Adrenal gland (tissue), 19 donors: ENCODE measurements at regions of chr13 and their contacts with region 1.

Region 1: GRCh38 chr13:29707876-29708543 is 112.5 kb upstream of the SLC7A1 start:
- DNase-seq: peak in 5 of 7 donors; percentile 15 to 39 (median 26)
- H3K4me3 ChIP-seq: no peak overlapping the region
- H3K27ac ChIP-seq: no peak overlapping the region
- H3K4me1 ChIP-seq: no peaks in the 10 kb centered on the region
- H3K27me3 ChIP-seq: no peaks in the 10 kb centered on the region
- CTCF ChIP-seq: peak in 5 of 6 experiments; percentile 30 to 45 (median 40)
- POLR2A ChIP-seq: no peak

Region 2: GRCh38 chr13:29508130-29508875 is 199.7 kb before region 1 on chr13:
- intact Hi-C with region 1: loop called (anchors 5 kb)
- DNase-seq: peak; percentile 72 to 95 (median 87)
- H3K4me3 ChIP-seq: no peak overlapping the region
- H3K27ac ChIP-seq: no peak overlapping the region
- H3K4me1 ChIP-seq: peaks cover 0 to 4% of the 10 kb centered on the region in 2 donors
- H3K27me3 ChIP-seq: peaks cover 15% of the 10 kb centered on the region
- CTCF ChIP-seq: peak; percentile 92 to 99 (median 94)
- POLR2A ChIP-seq: no peak

Region 3: GRCh38 chr13:29513397-29514322 is 194.3 kb before region 1 on chr13:
- intact Hi-C with region 1: loop called (anchors 5 kb)
- DNase-seq: no peak
- H3K4me3 ChIP-seq: no peak overlapping the region
- H3K27ac ChIP-seq: no peak overlapping the region
- H3K4me1 ChIP-seq: peaks cover 0 to under 1% of the 10 kb centered on the region in 2 donors
- H3K27me3 ChIP-seq: no peaks in the 10 kb centered on the region
- CTCF ChIP-seq: no peak
- POLR2A ChIP-seq: no peak

Region 4: GRCh38 chr13:30408319-30409101 is 700.5 kb after region 1 on chr13:
- intact Hi-C with region 1: no loop called
- DNase-seq: peak; percentile 96 to 99 (median 97)
- H3K4me3 ChIP-seq: peak overlapping the region in 2 of 4 donors; percentile 11 to 18
- H3K27ac ChIP-seq: peak overlapping the region in 4 of 5 donors; percentile 77 to 87 (median 82)
- H3K4me1 ChIP-seq: peaks cover 4 to 5% of the 10 kb centered on the region in 2 donors
- H3K27me3 ChIP-seq: no peaks in the 10 kb centered on the region
- CTCF ChIP-seq: peak; percentile 63 to 87 (median 80)
- POLR2A ChIP-seq: peak in 1 of 2 donors; percentile 64